Activated CD8-positive, alpha-beta T cell treated with anti-CD3 and anti-CD28 coated beads, Interleukin-2, amount 10 ng/mL, durations not matched to agents 7 days and 5 days (primary cell): ENCODE measurements at regions of chr5 and their contacts with region 1.

Region 1: GRCh38 chr5:139765409-139766217 is 30.0 kb upstream of the PSD2 start:
- DNase-seq: peak; percentile 86
- ATAC-seq: peak; percentile 91
- H3K4me3 Mint-ChIP-seq: peak overlapping the region; percentile 71
- H3K27ac Mint-ChIP-seq: no peak overlapping the region
- H3K4me1 Mint-ChIP-seq: peaks cover 16% of the 10 kb centered on the region
- H3K27me3 Mint-ChIP-seq: peaks cover 28% of the 10 kb centered on the region

Region 2: DNA sequence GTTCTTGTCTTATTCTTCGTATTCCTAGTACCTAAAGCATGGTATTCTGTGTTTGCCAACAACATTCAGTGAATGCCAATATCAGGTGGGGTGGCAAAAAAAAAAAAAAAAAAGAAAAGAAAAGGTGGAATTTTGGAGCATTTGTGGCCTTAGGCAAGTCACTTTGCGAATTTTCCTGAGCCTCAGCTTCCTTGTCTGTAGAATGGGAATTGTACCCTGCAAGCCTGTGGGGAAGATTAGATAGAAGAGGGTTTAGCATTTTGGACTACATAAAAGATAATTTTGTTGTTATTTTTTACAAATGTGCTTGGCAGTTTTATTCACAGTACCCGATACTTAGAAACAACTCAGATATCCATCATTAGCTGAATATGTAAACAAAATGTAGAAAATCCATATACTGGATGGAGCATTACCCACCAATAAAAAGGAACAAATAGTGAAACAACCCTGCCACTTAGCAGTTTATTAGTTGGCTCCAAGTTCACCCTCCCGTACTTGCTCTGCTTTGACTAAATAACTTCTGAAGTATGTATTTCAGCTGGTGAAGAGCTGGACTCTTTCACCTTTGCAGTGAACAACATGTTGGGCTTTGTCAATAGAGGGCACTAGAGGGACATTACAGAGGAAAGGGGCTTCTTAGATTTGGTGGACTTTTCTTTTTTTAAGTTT is 190.8 kb before region 1 on chr5:
- CTCF ChIA-PET with region 1: interaction called, 11 read pairs
- POLR2A ChIA-PET with region 1: no interaction called
- DNase-seq: peak; percentile 49
- ATAC-seq: peak; percentile 35
- H3K4me3 Mint-ChIP-seq: no peak overlapping the region
- H3K27ac Mint-ChIP-seq: peak overlapping the region; percentile 26
- H3K4me1 Mint-ChIP-seq: peaks cover 73% of the 10 kb centered on the region
- H3K27me3 Mint-ChIP-seq: no peaks in the 10 kb centered on the region

Region 3: DNA sequence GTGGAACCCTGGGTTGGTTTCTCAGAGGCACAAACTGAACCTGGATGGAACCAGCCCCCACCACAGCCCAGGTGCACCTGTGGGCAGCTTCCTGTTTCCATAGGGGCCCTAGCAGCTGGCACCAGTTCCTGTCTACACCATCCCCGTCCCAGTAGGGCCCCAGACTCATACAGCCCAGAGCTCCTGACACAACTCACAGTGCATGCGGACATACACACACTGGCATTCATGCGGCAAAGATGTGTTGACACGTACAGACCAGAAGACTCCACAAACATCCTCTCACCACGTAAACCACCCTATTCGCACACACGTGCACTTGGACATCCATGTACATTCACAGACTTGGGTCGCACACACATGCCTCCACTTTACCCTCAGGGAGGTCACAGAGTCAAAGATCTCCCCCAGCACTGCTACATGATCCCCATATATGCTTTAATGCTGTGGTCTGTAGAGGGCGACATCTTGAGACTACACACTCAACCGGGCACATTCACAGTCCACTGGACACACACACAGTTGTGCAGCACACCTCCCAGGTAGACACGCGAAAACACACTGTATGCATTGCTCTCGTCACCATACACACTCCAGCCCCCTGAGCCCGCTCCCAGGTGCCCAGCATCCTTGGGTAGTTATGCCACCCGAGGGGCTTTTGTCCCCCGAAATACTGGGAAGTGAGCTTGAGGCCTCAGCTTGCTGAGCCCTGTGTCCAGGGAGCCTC is 95.1 kb before region 1 on chr5:
- CTCF ChIA-PET with region 1: interaction called, 16 read pairs
- POLR2A ChIA-PET with region 1: no interaction called
- DNase-seq: peak; percentile 58
- ATAC-seq: peak; percentile 38
- H3K4me3 Mint-ChIP-seq: peak overlapping the region; percentile 77
- H3K27ac Mint-ChIP-seq: peak overlapping the region; percentile 91
- H3K4me1 Mint-ChIP-seq: peaks cover 50% of the 10 kb centered on the region
- H3K27me3 Mint-ChIP-seq: no peaks in the 10 kb centered on the region

Region 4: GRCh38 chr5:139711067-139711905 is 54.3 kb before region 1 on chr5:
- CTCF ChIA-PET with region 1: interaction called, 16 read pairs
- POLR2A ChIA-PET with region 1: no interaction called
- DNase-seq: peak; percentile 69
- ATAC-seq: peak; percentile 66
- H3K4me3 Mint-ChIP-seq: peak overlapping the region; percentile 64
- H3K27ac Mint-ChIP-seq: no peak overlapping the region
- H3K4me1 Mint-ChIP-seq: peaks cover 17% of the 10 kb centered on the region
- H3K27me3 Mint-ChIP-seq: peaks cover 15% of the 10 kb centered on the region

Region 5: DNA sequence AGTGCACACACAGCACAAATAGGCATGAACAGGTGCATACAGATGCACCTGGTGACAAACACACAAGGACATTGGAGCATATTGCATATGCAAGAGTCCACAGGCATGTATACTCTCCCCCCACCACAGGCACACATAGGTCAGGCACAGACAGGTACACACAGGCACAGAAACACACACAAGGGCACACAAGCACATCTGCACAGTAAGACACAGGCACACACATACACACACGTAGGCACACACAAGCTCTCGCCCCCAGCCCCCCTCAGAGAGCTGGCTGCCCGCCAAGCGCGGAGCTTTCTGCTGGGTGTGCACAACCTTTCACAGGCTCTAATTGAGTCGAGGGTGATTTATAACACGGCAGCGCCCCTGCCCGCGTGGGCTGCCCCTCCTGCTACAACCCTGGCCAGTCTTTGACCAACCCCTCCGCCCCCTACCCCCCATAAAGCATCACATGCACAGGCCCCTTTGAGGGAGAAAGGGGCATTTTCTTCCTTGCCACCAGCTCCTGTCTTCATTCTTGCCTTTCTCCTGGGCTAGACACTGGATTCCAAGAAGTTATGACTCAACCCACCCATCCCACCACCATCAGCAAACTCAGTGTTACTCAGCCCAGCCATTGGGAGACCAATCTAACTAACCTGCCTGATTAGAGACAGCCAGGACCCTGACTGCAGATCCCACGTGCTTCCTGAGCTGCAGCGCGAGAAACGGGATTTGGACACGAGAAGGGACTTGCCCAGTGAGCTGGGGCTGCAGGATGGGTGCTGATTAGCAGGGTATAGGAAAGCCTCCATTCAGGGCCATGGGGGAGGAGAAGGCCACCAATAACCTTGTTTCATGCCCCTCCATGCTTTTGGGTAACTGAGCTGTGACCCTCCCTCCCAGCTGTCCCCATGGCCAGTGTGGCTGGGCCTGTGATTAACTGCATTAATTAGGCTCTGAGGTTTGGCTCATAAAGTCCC is 12.8 kb before region 1 on chr5:
- CTCF ChIA-PET with region 1: interaction called, 37 read pairs
- POLR2A ChIA-PET with region 1: no interaction called
- DNase-seq: no peak
- ATAC-seq: no peak
- H3K4me3 Mint-ChIP-seq: no peak overlapping the region
- H3K27ac Mint-ChIP-seq: no peak overlapping the region
- H3K4me1 Mint-ChIP-seq: peaks cover 18% of the 10 kb centered on the region
- H3K27me3 Mint-ChIP-seq: peaks cover 60% of the 10 kb centered on the region